Colonic mucosa (tissue), 4 donors: ENCODE measurements at regions of chr11 and their contacts with region 1.

Region 1: DNA sequence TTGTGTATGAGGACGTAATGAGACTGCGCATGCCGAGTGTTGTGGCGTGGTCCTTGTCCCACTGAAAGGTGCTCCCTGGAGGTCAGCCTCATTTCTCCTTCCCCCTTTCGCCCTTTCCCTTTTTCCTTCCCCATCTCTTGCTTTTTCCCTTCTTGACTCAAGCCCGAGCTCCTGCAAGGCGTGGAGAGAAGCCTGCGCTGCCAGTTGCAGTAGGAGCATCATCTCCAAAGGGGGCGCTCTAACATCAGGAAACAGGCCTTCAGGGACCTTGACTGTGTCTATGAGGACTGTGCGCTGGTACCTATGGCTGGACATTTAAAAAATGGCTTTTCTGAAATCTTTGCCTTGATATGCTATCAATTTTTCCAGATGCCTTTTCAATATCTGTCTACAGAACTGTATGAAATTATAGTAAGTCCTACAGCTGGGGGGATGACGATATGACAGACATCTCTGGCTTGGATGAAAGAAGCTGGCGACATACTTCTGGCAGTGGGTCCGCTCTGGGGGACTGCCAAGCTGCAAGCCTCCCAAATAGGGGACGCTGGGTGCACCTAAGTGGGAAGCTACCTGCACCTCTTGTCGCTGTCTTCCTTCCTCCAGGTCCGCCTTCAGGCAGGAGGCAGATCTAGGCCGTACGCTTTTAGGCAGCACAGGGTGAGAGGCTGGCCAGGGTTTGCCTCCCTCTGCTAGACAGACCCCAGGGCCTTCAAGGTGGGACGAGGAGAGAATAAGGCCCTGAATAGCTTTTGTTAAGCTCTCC is 96.5 kb downstream of the NXPE2 start:
- DNase-seq: peak; percentile 56
- H3K4me3 ChIP-seq: no peak overlapping the region
- H3K27ac ChIP-seq: no peak overlapping the region
- H3K4me1 ChIP-seq: no peaks in the 10 kb centered on the region
- H3K27me3 ChIP-seq: no peaks in the 10 kb centered on the region
- CTCF ChIP-seq: peak; percentile 58

Region 2: GRCh38 chr11:114553642-114554041 is 221.1 kb before region 1 on chr11:
- intact Hi-C with region 1: no loop called
- DNase-seq: no peak
- H3K4me3 ChIP-seq: no peak overlapping the region
- H3K27ac ChIP-seq: no peak overlapping the region
- H3K4me1 ChIP-seq: no peaks in the 10 kb centered on the region
- H3K27me3 ChIP-seq: no peaks in the 10 kb centered on the region
- CTCF ChIP-seq: no peak

Region 3: DNA sequence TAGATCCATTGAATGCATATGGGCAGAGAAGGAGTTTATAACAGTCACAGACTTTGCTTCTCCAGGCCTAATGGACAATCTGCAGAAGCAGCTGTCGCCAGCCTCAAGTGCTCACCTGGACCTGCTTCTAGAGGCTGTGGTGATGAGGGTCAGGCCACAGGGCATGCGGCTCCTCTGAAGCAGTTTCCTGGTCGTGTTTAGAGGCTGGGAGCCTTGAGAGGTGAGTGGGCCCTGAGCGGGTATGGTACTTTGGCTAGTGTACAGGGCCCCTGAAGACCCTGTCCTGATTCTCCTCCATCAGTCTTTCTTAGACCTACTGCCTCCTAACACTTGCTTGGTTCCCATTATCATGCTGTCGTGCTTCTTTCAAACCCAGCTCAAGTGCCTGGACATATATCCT is 55.2 kb before region 1 on chr11:
- intact Hi-C with region 1: no loop called
- DNase-seq: no peak
- H3K4me3 ChIP-seq: no peak overlapping the region
- H3K27ac ChIP-seq: no peak overlapping the region
- H3K4me1 ChIP-seq: no peaks in the 10 kb centered on the region
- H3K27me3 ChIP-seq: no peaks in the 10 kb centered on the region
- CTCF ChIP-seq: no peak

Region 4: DNA sequence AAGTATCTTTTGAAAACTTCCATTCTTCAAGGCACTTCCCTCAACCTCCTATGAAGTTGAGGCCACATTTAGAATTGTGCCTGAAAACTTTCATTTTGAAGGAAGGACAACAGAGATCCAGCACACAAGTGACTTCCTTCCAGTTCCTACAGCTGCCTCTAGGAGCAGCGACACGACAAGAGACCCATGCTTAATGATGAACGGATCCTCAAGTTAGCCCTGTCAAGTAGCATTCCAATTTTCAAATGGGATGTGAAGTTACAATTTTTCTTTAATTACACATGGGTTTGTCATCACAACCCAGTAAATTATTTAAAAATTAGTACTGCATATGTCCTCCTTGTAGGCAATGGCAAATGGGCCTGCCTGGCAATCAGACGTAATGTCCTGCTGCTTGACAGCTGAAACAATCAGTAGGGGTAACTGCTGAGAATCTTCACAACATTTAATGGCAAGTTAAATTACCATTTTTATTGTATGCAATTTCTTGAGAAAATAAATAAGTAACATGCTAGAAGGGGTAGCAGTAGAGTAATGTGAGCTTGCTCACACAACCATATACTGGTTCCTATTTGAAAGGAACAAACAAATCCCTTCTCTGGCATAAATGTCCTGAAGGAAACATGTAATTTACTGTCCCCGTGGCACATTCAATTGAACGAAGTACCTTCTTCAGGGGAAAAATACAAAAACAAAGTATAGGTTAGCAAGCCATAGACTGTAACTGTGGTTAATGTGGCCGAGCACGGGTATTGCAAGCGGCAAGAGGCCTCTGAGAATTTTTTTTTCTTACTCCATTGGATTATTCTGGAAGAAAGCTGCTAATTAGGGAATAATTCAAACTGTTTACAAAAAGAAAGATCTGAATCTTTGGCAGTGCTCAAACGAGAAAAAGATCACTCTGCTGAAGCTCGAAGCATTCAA is 441.2 kb after region 1 on chr11:
- intact Hi-C with region 1: no loop called
- DNase-seq: no peak
- H3K4me3 ChIP-seq: no peak overlapping the region
- H3K27ac ChIP-seq: no peak overlapping the region
- H3K4me1 ChIP-seq: no peaks in the 10 kb centered on the region
- H3K27me3 ChIP-seq: no peaks in the 10 kb centered on the region
- CTCF ChIP-seq: no peak

Region 5: DNA sequence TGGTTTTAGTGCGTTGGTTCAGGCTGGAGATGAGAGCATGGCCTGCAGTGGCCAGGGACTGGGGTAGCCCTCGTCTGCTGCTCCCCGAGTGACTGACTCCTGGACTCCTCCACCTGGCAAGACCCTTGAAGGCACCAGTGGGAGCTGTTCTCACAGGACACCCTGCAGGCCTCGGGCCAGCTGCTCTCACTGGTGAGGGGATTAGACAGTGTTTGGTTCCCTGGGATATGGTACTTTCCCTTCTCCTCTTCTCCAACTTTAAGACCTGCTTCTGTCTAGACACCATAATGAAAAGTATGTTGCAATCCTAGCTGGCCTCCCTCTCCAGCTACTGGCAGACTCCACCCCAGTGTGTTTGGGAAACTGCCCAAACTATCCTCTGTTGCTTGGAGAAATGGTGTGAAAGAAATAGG is 898.2 kb after region 1 on chr11:
- intact Hi-C with region 1: loop called (anchors 10 kb)
- DNase-seq: no peak
- H3K4me3 ChIP-seq: no peak overlapping the region
- H3K27ac ChIP-seq: no peak overlapping the region
- H3K4me1 ChIP-seq: no peaks in the 10 kb centered on the region
- H3K27me3 ChIP-seq: no peaks in the 10 kb centered on the region
- CTCF ChIP-seq: no peak